IMR-90 (cell line): ENCODE measurements at regions of chr17 and their contacts with region 1.

Region 1: DNA sequence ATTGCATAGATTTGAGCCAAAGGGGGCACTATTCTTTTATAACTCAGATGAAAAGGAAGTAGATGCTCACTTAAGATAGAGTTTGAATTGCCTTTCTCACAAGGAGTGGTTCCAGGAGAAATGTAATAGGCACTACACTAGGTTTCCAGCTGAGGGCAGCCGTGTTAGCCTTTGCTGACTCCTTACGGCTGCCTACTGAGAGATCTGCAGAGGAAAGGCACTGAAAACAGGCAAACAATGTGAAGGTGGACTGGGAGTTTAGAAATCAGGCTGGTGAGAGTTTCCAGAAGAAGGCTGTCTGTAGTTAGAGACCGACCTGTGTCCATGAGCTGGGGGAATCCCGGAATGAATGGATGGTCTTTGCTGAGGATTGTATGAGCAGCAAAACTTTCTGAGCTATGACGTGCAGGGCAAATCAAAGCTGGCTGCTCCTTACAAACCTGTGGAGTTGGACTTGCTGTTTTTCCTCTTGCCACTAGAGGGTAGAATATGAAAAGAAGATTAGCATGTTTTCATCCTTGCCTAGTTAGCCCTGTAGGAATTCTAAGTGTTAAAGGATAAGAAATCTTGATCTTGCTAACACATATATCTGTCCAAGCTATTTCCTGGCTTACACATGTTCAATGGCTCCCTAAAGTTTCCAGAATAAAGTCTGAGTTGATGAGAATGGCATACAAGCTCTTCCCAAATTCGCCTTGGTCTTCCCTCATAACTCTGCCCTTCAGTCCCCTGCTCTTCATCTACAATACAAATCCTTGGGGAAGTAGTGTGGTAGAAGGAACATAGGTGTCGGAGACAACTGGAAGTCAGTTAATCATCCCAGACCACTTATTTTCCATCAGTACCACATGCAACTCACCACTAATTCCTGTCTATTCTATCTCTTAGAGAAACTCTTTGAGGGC is 20.1 kb upstream of the TAOK1 start:
- DNase-seq: peak; percentile 85
- ATAC-seq: peak; percentile 96
- H3K4me3 ChIP-seq: peak overlapping the region; percentile 36; the same call in 1 of the 2 replicates
- H3K27ac ChIP-seq: no peak overlapping the region
- H3K4me1 ChIP-seq: no peaks in the 10 kb centered on the region
- H3K27me3 ChIP-seq: no peaks in the 10 kb centered on the region
- CTCF ChIP-seq: peak; percentile 74
- POLR2A ChIP-seq: peak; percentile 42; the same call in 1 of the 2 replicates
- RAD21 ChIP-seq: peak; percentile 73

Region 2: GRCh38 chr17:29444589-29444988 is 74.5 kb after region 1 on chr17:
- CTCF ChIA-PET with region 1: no interaction called
- POLR2A ChIA-PET with region 1: no interaction called
- dilution Hi-C with region 1: no loop called
- in situ Hi-C with region 1: no loop called
- intact Hi-C with region 1: no loop called
- DNase-seq: peak; percentile 75
- ATAC-seq: peak; percentile 81
- H3K4me3 ChIP-seq: no peak overlapping the region
- H3K27ac ChIP-seq: no peak overlapping the region
- H3K4me1 ChIP-seq: peaks cover 3% of the 10 kb centered on the region
- H3K27me3 ChIP-seq: no peaks in the 10 kb centered on the region
- CTCF ChIP-seq: no peak
- POLR2A ChIP-seq: no peak
- RAD21 ChIP-seq: no peak

Region 3: DNA sequence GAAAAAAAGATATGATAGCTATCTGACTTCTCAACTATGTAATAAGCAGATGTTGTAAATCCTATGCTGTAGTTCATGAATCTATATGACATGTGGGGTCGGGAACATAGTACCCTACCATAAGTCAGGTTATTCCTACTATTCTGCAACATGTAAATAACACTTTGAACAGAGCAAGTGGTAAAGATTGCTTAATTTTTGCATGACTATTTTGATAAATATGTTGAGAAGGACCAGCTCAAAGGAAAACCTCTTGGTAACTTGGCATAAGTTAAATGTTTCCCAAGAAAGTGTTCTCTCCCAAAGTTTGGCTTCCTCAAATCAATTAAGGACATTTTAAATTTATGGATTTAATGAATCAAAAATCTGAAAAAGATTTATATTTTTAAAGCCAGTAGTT is 134.6 kb after region 1 on chr17:
- CTCF ChIA-PET with region 1: interaction called, 3 read pairs
- POLR2A ChIA-PET with region 1: no interaction called
- dilution Hi-C with region 1: no loop called
- in situ Hi-C with region 1: no loop called
- intact Hi-C with region 1: loop called (anchors 10 kb)
- DNase-seq: peak; percentile 12
- ATAC-seq: peak; percentile 40; the same call in 1 of the 2 replicates
- H3K4me3 ChIP-seq: no peak overlapping the region
- H3K27ac ChIP-seq: no peak overlapping the region
- H3K4me1 ChIP-seq: no peaks in the 10 kb centered on the region
- H3K27me3 ChIP-seq: no peaks in the 10 kb centered on the region
- CTCF ChIP-seq: no peak
- POLR2A ChIP-seq: no peak
- RAD21 ChIP-seq: no peak

Region 4: DNA sequence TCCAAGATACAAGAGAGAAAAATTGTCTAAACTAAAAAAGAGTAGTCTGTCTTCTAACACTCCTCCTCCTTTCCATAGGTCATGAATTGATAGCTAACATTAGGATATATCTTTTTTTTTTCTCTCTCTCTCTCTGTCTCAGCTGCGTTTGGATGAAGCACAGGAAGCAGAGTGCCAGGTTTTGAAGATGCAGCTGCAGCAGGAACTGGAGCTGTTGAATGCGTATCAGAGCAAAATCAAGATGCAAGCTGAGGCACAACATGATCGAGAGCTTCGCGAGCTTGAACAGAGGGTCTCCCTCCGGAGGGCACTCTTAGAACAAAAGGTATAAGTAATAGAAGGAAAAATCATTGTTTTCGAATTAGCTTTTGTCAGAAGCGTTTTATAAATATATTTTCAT is 163.9 kb after region 1 on chr17:
- CTCF ChIA-PET with region 1: interaction called, 11 read pairs
- POLR2A ChIA-PET with region 1: no interaction called
- dilution Hi-C with region 1: no loop called
- in situ Hi-C with region 1: loop called (anchors 5 kb)
- intact Hi-C with region 1: loop called (anchors 1 kb)
- DNase-seq: no peak
- ATAC-seq: no peak
- H3K4me3 ChIP-seq: no peak overlapping the region
- H3K27ac ChIP-seq: no peak overlapping the region
- H3K4me1 ChIP-seq: no peaks in the 10 kb centered on the region
- H3K27me3 ChIP-seq: no peaks in the 10 kb centered on the region
- CTCF ChIP-seq: no peak
- POLR2A ChIP-seq: no peak
- RAD21 ChIP-seq: no peak

Region 5: DNA sequence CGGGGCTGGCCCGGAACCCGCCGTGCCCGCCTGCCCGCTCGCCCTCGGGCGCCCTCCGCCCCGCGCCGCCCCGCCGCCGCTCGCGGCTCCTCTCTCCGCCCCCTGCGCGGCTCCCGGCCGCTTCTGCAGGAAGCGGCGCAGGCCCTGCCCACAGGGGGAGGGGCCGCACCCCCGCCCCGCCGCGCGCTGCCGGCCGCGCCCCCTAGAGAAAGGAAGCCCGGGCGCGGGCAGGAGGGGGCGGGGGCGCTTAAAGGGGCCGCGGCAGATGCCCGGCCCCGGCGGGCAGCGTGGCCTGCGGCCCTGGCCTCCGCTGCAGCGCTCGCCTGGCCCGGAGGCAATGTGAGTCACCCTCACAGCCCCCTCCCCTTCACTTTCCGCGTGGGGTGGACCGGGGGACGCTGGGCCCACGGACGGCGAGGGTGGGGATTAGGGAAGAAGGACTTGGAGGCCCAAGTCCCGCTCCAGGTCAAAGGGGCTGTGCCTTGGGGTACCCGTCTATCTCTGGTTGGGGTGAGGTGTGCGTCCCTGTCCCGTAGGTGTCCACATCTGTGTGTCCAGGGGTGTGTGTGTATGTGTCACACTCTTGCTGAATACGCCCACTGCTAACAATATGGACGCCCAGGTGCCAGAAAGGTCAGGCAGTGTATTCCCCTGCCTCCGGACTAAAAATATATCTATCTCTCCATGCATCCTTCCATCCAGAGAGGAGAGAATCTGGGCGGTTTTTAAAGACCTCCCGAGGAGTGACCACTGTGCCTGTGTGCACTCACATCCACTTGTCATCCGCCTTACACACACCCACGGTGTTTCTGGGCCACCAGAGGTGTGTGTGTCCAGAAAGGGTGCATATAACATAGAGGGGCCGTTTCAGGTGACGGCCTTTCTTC is 219.7 kb after region 1 on chr17 and contains the start of gene GIT1:
- CTCF ChIA-PET with region 1: interaction called, 4 read pairs
- POLR2A ChIA-PET with region 1: no interaction called
- dilution Hi-C with region 1: no loop called
- in situ Hi-C with region 1: no loop called
- intact Hi-C with region 1: loop called (anchors 1 kb)
- DNase-seq: peak; percentile 78
- ATAC-seq: peak; percentile 82
- H3K4me3 ChIP-seq: peak within 1 kb of the TSS; percentile 85
- H3K27ac ChIP-seq: peak within 1 kb of the TSS; percentile 92
- H3K4me1 ChIP-seq: peaks cover 43% of the 10 kb centered on the region
- H3K27me3 ChIP-seq: peaks cover 2% of the 10 kb centered on the region; the same call in 1 of the 2 replicates
- CTCF ChIP-seq: peak; percentile 19; the same call in 1 of the 2 replicates
- POLR2A ChIP-seq: no peak
- RAD21 ChIP-seq: no peak
- total RNA-seq, gene GIT1: 13.3 and 14.2 TPM in 2 replicates